ENCODE measurements at regions of chr13 and their contacts with region 1.

Region 1: DNA sequence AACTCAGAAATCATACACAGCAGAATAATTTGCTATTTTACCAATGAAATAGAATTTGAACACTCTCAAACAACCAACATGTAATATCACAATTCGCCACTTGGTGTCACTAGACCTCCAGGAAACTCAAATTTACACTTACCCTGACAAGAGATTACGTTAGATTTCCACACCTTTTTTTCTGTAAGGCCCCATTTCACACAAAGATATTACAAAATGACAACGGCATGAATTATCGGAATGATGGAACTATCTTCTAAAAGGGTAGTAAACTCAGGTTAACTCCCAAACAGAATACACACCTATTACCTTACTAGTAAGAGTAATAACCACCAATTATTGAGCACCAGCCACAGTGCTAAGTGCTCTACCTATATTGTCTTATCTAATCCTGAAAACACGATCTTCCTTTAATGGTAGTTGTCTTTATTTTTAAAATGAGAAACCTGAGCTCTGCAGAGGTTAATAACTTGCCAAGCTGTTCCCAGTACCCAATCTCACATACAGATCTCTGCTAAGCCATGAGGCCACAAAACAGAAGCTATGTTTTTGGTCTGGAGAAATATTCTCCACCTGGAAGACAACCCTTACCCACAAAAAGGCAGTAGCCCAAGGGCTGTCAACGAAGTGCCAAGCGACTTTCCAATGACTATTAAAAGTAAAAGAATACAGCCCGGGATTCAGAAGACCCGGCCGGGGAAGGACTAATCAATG is 152.4 kb downstream of the DCLK1 start:
- DNase-seq: no peak
- H3K4me3 ChIP-seq: no peak overlapping the region
- H3K27ac ChIP-seq: peak overlapping the region; percentile 60 to 72 (median 68)
- H3K4me1 ChIP-seq: peaks cover 0 to 13% (median 8%) of the 10 kb centered on the region in 4 donors
- H3K27me3 ChIP-seq: no peaks in the 10 kb centered on the region
- CTCF ChIP-seq: peak; percentile 39 to 90 (median 82)
- EP300 ChIP-seq: no peak
- POLR2A ChIP-seq: no peak

Region 2: GRCh38 chr13:35699805-35700510 is 278.8 kb before region 1 on chr13:
- intact Hi-C with region 1: no loop called
- DNase-seq: peak; percentile 80
- H3K4me3 ChIP-seq: peak overlapping the region in 3 of 4 donors; percentile 25 to 29 (median 26)
- H3K27ac ChIP-seq: peak overlapping the region; percentile 68 to 80 (median 70)
- H3K4me1 ChIP-seq: peaks cover 0 to 25% (median 21%) of the 10 kb centered on the region in 4 donors
- H3K27me3 ChIP-seq: no peaks in the 10 kb centered on the region
- CTCF ChIP-seq: no peak
- EP300 ChIP-seq: no peak
- POLR2A ChIP-seq: no peak

Region 3: GRCh38 chr13:36074659-36075058 is 95.9 kb after region 1 on chr13:
- intact Hi-C with region 1: no loop called
- DNase-seq: no peak
- H3K4me3 ChIP-seq: no peak overlapping the region
- H3K27ac ChIP-seq: no peak overlapping the region
- H3K4me1 ChIP-seq: no peaks in the 10 kb centered on the region
- H3K27me3 ChIP-seq: no peaks in the 10 kb centered on the region
- CTCF ChIP-seq: no peak
- EP300 ChIP-seq: no peak
- POLR2A ChIP-seq: no peak

Region 4: DNA sequence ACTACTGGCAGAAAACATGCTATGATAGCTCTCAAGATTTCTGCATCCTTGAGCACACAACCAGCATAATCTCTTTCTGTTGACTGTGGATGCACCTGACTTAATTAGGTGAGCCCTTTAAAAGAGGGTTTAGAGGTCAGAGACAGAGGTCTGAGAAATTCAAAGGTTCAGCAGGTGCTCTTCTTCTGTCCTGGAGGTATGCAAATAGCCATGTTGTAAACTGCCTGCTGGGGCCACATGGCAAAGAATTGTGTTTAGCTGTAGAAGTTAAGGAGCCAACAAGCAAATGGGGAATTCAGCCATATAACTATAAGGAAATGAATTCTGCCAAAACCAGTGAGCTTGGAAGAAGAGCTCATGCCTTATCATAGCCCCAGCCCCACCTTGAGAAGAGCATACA is 164.0 kb after region 1 on chr13:
- intact Hi-C with region 1: no loop called
- DNase-seq: no peak
- H3K4me3 ChIP-seq: no peak overlapping the region
- H3K27ac ChIP-seq: no peak overlapping the region
- H3K4me1 ChIP-seq: no peaks in the 10 kb centered on the region
- H3K27me3 ChIP-seq: no peaks in the 10 kb centered on the region
- CTCF ChIP-seq: no peak
- EP300 ChIP-seq: no peak
- POLR2A ChIP-seq: no peak

Region 5: DNA sequence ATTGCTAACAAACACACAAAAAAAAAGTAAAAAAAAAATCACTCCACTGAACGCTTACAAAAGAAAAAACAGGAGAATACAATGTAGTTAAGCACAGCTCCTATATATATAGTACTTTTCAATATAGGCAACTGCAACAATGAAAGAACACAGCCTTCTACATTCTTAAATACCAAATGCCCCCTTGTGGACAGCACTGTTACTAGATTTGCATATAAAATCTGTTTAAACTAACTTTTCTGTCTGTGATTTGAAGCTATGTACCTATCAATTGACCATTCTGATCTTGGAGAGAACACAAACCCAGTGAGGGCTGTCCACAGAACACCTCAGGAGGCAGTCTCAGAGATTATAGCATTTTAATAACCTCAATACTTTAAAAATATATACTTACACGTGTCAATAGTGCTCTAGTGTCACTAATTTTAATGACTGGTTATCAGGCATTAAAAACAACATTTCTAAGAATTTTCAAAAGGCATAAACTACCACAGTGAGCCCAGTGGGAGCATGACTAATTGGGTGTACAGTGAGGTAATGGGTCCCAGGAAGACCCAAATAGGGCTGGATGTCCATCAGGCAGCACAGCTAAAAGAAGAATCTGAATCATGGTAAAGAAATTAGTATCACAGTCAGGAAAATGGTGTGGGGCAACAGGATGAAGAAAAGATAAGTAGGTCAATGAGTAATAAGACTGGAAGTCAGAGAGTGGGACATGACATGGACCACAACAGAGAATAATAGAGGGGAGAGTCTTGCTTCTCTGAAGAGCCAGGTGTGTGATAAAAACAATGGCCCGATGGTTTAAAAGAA is 296.6 kb after region 1 on chr13:
- intact Hi-C with region 1: loop called (anchors 1 kb)
- DNase-seq: no peak
- H3K4me3 ChIP-seq: no peak overlapping the region
- H3K27ac ChIP-seq: no peak overlapping the region
- H3K4me1 ChIP-seq: no peaks in the 10 kb centered on the region
- H3K27me3 ChIP-seq: no peaks in the 10 kb centered on the region
- CTCF ChIP-seq: peak; percentile 24 to 67 (median 52)
- EP300 ChIP-seq: no peak
- POLR2A ChIP-seq: no peak

Region 6: DNA sequence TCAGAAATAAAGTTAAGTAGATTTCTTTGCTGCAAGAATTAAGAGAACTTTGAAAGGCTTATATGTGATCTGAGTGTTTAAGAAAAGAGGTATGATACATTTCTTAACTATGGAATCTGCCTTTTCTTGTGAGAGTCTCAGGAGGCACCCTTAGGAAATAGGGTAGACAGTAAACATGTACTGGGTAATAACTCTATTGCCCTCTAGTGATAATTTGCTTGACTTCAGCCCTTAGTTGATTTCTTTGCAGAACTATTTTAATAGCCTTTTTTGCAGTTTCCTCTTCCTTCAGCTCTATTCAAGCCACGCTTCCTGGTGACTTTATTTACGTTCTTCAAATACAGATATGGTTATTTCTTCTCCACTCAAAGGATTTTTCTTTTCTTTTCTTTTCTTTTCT is 416.5 kb after region 1 on chr13:
- intact Hi-C with region 1: loop called (anchors 5 kb)
- DNase-seq: no peak
- H3K4me3 ChIP-seq: no peak overlapping the region
- H3K27ac ChIP-seq: no peak overlapping the region
- H3K4me1 ChIP-seq: no peaks in the 10 kb centered on the region
- H3K27me3 ChIP-seq: no peaks in the 10 kb centered on the region
- CTCF ChIP-seq: peak in 2 of 4 experiments; percentile 24 to 47
- EP300 ChIP-seq: no peak
- POLR2A ChIP-seq: no peak

Region 7: GRCh38 chr13:36736119-36736726 is 757.5 kb after region 1 on chr13:
- intact Hi-C with region 1: loop called (anchors 5 kb)
- DNase-seq: peak; percentile 69
- H3K4me3 ChIP-seq: no peak overlapping the region
- H3K27ac ChIP-seq: no peak overlapping the region
- H3K4me1 ChIP-seq: no peaks in the 10 kb centered on the region
- H3K27me3 ChIP-seq: no peaks in the 10 kb centered on the region
- CTCF ChIP-seq: peak; percentile 32 to 69 (median 59)
- EP300 ChIP-seq: no peak
- POLR2A ChIP-seq: no peak